Activated CD4-positive, alpha-beta T cell treated with anti-CD3 and anti-CD28 coated beads, Interleukin-2, amount 10 ng/mL, durations not matched to agents 7 days and 5 days (primary cell): ENCODE measurements at regions of chr12 and their contacts with region 1.

Region 1: GRCh38 chr12:92030618-92031017 is 115.0 kb downstream of the BTG1 start:
- DNase-seq: peak; percentile 74
- H3K4me3 Mint-ChIP-seq: peak overlapping the region; percentile 55
- H3K27ac Mint-ChIP-seq: peak overlapping the region; percentile 93
- H3K4me1 Mint-ChIP-seq: peaks cover 83% of the 10 kb centered on the region
- H3K27me3 Mint-ChIP-seq: no peaks in the 10 kb centered on the region

Region 2: GRCh38 chr12:91940826-91941570 is 89.6 kb before region 1 on chr12:
- CTCF ChIA-PET with region 1: no interaction called
- POLR2A ChIA-PET with region 1: no interaction called
- DNase-seq: no peak
- H3K4me3 Mint-ChIP-seq: no peak overlapping the region
- H3K27ac Mint-ChIP-seq: no peak overlapping the region
- H3K4me1 Mint-ChIP-seq: no peaks in the 10 kb centered on the region
- H3K27me3 Mint-ChIP-seq: no peaks in the 10 kb centered on the region

Region 3: GRCh38 chr12:92041742-92042141 is 11.1 kb after region 1 on chr12:
- CTCF ChIA-PET with region 1: interaction called, 25 read pairs
- POLR2A ChIA-PET with region 1: interaction called, 3 read pairs
- DNase-seq: peak; percentile 42
- H3K4me3 Mint-ChIP-seq: no peak overlapping the region
- H3K27ac Mint-ChIP-seq: peak overlapping the region; percentile 58
- H3K4me1 Mint-ChIP-seq: peaks cover 55% of the 10 kb centered on the region
- H3K27me3 Mint-ChIP-seq: no peaks in the 10 kb centered on the region

Region 4: DNA sequence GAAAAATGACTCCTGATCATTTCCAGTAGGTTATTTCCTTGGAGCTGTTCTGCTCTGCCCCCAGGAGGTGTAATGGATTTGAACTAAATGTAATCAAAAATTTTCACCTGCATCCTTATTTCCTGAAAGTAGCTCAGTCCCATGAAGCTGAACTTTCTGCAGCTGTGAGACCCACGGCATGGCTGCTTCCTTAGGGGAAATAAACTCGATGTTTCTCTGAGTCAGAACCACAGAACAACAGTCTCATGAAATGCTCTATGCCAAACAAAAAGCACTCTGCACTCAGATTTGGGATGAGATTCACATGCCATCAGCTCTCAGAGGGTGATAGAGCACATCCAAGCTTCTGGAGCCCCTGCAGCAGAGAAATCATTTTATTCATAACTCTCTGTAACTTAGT is 448.1 kb after region 1 on chr12:
- CTCF ChIA-PET with region 1: no interaction called
- POLR2A ChIA-PET with region 1: interaction called, 14 read pairs
- DNase-seq: no peak
- H3K4me3 Mint-ChIP-seq: no peak overlapping the region
- H3K27ac Mint-ChIP-seq: no peak overlapping the region
- H3K4me1 Mint-ChIP-seq: no peaks in the 10 kb centered on the region
- H3K27me3 Mint-ChIP-seq: no peaks in the 10 kb centered on the region